PC-9 (cell line): ENCODE measurements at regions of chr10 and their contacts with region 1.

Region 1: DNA sequence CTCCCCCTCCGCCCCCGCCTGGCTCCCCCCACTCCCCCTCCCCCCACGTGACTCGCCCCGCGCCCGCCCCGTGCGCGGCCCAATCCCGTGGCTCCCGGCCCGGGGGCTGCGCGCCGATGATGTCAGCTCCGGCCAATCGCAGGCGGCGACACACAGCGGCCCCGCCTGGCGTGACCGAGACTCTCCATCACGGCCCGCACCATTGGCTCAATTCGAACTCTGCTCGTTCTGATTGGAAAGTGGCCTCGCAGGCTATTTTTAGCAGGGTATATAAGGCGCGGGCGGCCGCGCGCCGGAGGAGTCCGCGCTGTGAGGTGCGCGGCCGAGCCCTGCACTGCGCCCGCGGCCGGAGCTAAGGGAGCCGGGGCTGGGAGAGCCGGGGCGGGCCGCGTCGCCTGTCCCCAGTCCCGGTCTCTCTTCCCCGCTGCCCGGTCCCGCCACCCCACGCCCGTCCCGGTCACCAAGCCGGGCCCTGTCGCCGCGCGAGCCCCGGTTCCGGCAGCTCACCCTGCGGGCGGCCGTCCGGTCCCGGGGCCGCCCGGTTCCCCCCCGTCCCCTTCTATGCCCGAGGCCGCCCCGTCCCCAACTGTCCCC is 345 bp upstream of the KLF6 start:
- DNase-seq: peak; percentile 85 to 98
- H3K4me3 ChIP-seq: peak overlapping the region; percentile 85
- H3K27ac ChIP-seq: peak overlapping the region; percentile 92
- H3K4me1 ChIP-seq: peaks cover 26% of the 10 kb centered on the region
- H3K27me3 ChIP-seq: no peaks in the 10 kb centered on the region
- CTCF ChIP-seq: no peak

Region 2: GRCh38 chr10:3467052-3467951 is 318.1 kb before region 1 on chr10:
- CTCF ChIA-PET with region 1: no interaction called
- POLR2A ChIA-PET with region 1: interaction called, 4 read pairs
- intact Hi-C with region 1: loop called (anchors 1 kb)
- DNase-seq: peak; percentile 83 to 96
- H3K4me3 ChIP-seq: peak overlapping the region; percentile 42; the same call in 1 of the 2 replicates
- H3K27ac ChIP-seq: peak overlapping the region; percentile 100
- H3K4me1 ChIP-seq: peaks cover 58% of the 10 kb centered on the region
- H3K27me3 ChIP-seq: no peaks in the 10 kb centered on the region
- CTCF ChIP-seq: peak; percentile 61

Region 3: DNA sequence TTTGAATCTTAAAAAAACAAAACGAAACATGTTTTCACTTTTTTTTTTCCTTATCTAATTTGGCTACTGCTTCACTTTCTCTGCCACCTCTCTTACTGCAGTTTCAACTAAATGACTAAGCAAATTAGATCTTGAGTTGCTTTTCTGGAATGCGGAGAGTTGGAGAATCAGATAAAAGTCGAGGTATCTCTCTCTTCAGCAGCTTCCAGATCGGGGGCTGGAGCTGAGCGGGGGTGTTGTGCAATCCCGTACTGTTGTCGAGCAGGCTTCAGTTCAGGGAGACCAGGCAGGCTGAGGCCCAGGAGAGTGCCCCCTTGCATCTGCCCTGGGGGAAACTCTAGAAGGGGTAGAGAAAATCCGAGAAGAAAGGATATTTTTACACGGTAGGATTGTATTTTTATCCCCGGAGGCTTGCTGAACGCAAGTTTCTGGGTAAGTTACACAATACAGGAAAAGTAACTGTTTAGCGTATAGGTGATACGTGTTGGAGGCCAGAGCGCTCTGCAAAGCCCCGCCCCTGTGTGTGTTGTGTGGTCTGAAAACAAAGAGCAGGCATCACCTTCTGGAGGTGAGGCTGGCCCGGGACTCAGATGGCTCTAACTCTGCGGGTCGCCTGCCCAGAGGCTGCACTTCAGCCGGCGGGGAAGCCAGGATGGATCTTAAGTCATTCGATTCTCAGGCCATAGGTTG is 116.9 kb before region 1 on chr10:
- CTCF ChIA-PET with region 1: no interaction called
- POLR2A ChIA-PET with region 1: no interaction called
- intact Hi-C with region 1: loop called (anchors 1 kb)
- DNase-seq: peak; percentile 87 to 94
- H3K4me3 ChIP-seq: peak overlapping the region; percentile 50; the same call in 1 of the 2 replicates
- H3K27ac ChIP-seq: peak overlapping the region; percentile 99
- H3K4me1 ChIP-seq: peaks cover 23% of the 10 kb centered on the region
- H3K27me3 ChIP-seq: no peaks in the 10 kb centered on the region
- CTCF ChIP-seq: no peak

Region 4: GRCh38 chr10:3811291-3811870 is 26.0 kb after region 1 on chr10:
- CTCF ChIA-PET with region 1: no interaction called
- POLR2A ChIA-PET with region 1: interaction called, 27 read pairs
- intact Hi-C with region 1: loop called (anchors 1 kb)
- DNase-seq: peak in 1 of 2 experiments; percentile 35
- H3K4me3 ChIP-seq: no peak overlapping the region; the same call in 1 of the 2 replicates
- H3K27ac ChIP-seq: peak overlapping the region; percentile 96
- H3K4me1 ChIP-seq: peaks cover 53% of the 10 kb centered on the region
- H3K27me3 ChIP-seq: no peaks in the 10 kb centered on the region
- CTCF ChIP-seq: no peak

Region 5: DNA sequence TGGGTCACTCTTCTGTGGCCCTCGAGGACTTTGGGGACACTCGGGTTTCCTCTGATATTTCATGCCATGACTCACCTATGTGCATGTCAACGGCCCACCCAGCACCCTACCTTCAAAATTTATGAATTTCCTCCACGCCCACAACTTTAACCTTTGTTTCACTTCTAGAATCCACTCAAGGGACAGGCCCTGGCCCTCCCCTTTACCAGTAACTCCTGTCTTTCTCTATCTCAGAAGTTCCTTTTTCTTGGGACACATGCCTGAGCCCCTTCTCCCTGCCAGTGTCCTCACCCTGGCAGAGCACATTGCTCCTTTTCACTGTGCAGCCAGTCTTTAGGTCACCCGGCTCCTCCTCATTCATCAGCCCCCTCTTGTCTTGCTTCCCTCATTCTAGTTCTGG is 282.2 kb after region 1 on chr10:
- CTCF ChIA-PET with region 1: no interaction called
- POLR2A ChIA-PET with region 1: no interaction called
- intact Hi-C with region 1: loop called (anchors 10 kb)
- DNase-seq: no peak
- H3K4me3 ChIP-seq: no peak overlapping the region
- H3K27ac ChIP-seq: no peak overlapping the region
- H3K4me1 ChIP-seq: peaks cover 10% of the 10 kb centered on the region
- H3K27me3 ChIP-seq: no peaks in the 10 kb centered on the region
- CTCF ChIP-seq: no peak

Region 6: GRCh38 chr10:4767033-4767814 is 981.9 kb after region 1 on chr10:
- CTCF ChIA-PET with region 1: no interaction called
- POLR2A ChIA-PET with region 1: interaction called, 4 read pairs
- intact Hi-C with region 1: loop called (anchors 1 kb)
- DNase-seq: no peak
- H3K4me3 ChIP-seq: no peak overlapping the region
- H3K27ac ChIP-seq: no peak overlapping the region
- H3K4me1 ChIP-seq: peaks cover 19% of the 10 kb centered on the region
- H3K27me3 ChIP-seq: no peaks in the 10 kb centered on the region
- CTCF ChIP-seq: peak; percentile 72